Caco-2 (cell line): ENCODE measurements at regions of chr12 and their contacts with region 1.

Region 1: DNA sequence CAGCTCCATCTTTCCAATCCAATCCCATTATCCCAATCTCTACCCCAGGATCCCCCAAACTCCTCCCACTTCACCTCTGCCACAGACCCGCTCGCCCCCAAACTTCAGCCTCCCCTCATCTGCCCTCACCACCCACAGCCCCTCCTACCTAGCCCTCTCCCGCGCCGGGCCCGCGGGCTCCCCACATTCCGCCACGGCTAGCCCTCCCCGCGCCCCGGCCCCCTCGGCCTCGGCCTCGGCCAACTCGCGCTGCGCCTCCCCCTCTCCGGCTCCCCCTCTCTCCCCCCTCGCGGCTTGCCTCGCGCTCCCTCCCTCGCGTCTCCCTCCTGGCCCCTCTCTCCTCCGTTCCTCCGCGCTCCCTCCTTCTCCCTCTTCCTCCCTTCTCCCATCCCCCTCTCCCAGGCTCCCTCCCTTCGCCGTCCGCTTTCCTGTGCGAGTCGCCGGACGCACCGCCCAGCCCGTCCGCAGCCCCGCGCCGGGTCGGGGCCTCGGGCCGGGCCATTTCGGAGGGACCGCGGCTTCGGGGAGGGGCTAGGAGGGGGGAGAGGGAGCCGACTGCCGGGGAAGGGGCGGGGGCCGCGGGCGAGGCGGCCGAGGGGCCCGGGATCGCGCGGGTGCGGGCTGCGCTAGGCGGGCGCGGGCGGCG is at the start of gene ATN1:
- DNase-seq: peak; percentile 85 to 87
- H3K4me3 ChIP-seq: peak within 1 kb of the TSS; percentile 91
- H3K4me3 Mint-ChIP-seq: peak within 1 kb of the TSS; percentile 85
- H3K27ac Mint-ChIP-seq: peak within 1 kb of the TSS; percentile 76
- H3K4me1 ChIP-seq: peaks cover 43% of the 10 kb centered on the region
- H3K4me1 Mint-ChIP-seq: peaks cover 66% of the 10 kb centered on the region
- H3K27me3 ChIP-seq: no peaks in the 10 kb centered on the region
- H3K27me3 Mint-ChIP-seq: no peaks in the 10 kb centered on the region
- CTCF ChIP-seq: no peak
- total RNA-seq, gene ATN1: 126 TPM in 2 replicates

Region 2: DNA sequence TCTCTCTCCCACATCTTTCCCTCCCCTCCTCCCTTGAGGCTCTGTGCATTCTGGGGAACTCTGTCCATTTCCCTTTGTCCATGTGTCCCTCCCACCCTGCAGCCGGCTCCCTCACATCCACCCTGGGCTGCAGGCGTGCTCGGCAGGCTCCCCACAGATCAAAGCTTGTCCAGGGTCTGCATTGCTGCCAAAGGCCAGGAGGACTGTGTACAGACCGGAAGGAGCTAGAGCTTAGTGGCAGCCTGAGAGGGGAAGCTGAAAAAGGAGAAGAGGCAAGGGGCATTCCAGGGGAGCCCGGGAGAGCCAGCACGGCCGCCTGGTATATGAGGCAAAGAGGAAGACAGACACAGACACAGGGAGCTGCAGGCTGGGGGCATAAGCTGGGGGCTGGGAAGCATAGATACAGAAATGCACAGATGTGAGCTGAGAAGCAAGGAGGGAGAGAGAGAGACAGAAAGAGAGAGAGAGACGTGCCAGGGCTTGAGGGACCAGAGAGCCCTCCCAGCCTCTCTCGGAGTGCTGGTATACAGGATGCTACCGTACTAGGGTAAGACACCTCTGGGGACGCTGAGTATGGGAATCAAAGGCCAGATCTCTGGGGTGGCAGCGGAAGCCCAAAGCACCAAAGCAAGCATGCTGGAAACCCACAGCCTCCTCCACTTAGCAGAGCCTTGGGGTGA is 134.8 kb before region 1 on chr12:
- CTCF ChIA-PET with region 1: no interaction called
- POLR2A ChIA-PET with region 1: interaction called, 12 read pairs
- intact Hi-C with region 1: no loop called
- DNase-seq: no peak
- H3K4me3 ChIP-seq: no peak overlapping the region
- H3K4me3 Mint-ChIP-seq: no peak overlapping the region
- H3K27ac Mint-ChIP-seq: no peak overlapping the region
- H3K4me1 ChIP-seq: no peaks in the 10 kb centered on the region
- H3K4me1 Mint-ChIP-seq: peaks cover 20% of the 10 kb centered on the region
- H3K27me3 ChIP-seq: no peaks in the 10 kb centered on the region
- H3K27me3 Mint-ChIP-seq: no peaks in the 10 kb centered on the region
- CTCF ChIP-seq: no peak

Region 3: DNA sequence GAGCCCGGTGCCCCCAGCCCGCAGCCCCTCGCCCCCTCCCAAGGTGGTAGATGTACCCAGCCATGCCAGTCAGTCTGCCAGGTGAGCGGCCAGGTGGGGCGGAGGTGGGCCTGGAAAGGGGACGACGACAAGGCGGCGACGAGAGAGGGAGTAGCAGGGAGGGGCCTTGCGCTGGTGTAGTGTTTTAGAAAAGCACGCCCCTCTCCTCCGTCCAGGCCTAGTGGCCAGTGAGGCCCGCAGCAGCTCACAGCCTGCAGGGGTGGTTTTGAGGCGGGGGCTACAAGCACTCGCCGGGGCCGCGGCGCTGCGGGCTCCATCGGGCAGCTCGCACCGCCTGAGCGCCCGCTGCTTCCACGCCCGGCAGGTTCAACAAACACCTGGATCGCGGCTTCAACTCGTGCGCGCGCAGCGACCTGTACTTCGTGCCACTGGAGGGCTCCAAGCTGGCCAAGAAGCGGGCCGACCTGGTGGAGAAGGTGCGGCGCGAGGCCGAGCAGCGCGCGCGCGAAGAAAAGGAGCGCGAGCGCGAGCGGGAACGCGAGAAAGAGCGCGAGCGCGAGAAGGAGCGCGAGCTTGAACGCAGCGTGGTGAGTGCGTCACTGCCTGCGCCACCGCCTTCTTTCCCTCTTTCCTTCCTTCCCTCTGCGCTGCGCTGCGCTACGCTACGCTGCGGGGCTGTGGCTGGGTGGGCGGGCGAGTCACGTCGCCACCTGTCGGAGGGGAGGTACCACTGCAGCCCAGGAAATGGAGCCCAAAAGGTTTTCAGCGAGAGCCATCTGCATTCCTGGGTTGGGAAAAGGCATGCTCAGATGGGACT is 10.2 kb after region 1 on chr12:
- CTCF ChIA-PET with region 1: interaction called, 56 read pairs
- POLR2A ChIA-PET with region 1: interaction called, 18 read pairs
- intact Hi-C with region 1: loop called (anchors 1 kb)
- DNase-seq: peak; percentile 97
- H3K4me3 ChIP-seq: peak overlapping the region; percentile 55
- H3K4me3 Mint-ChIP-seq: peak overlapping the region; percentile 73
- H3K27ac Mint-ChIP-seq: peak overlapping the region; percentile 92
- H3K4me1 ChIP-seq: peaks cover 10% of the 10 kb centered on the region
- H3K4me1 Mint-ChIP-seq: peaks cover 25% of the 10 kb centered on the region
- H3K27me3 ChIP-seq: no peaks in the 10 kb centered on the region
- H3K27me3 Mint-ChIP-seq: no peaks in the 10 kb centered on the region
- CTCF ChIP-seq: peak; percentile 98 to 99